ENCODE measurements at regions of chr11 and their contacts with region 1.

Region 1: DNA sequence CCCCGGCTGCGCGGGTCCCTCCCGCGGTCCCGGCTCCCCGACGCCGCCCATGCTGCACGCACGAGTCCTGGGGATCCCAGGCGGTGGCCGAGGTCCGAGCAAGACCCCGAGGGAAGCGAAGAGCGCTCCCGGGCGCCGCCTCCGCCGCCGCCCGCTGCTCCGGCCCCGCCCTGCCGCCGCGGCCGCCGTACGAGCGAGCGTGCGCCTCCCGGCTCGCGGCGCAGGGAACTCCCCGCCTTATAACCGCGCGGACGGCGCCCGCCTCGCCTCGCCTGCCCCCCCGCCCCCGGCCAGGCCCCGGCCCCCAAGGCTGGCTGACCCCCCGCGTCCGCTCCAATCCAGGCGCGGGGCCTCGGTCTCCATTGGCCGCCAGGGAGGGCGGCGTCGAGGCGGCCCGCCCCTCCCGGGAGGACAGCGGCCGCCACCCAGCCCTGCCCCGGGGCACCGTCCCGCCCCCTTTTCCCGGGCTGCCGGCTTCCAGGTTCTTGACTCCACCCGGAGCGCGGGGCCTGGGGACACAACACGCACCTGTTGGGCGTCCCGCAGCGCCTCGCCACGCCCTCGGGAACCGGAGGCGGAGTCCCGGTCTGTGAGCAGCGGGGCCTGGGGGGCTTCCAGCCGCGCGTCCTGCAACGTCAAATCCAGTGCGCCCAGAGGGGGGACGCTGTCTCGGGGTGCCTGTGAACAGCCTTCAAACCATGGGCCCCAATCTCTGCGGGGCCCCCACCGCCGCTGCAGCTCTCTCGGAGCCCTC is at the start of gene FADS3:
- DNase-seq: no peak
- H3K4me3 ChIP-seq: peak within 1 kb of the TSS; percentile 70 to 78
- H3K27ac ChIP-seq: peak within 1 kb of the TSS; percentile 89
- H3K4me1 ChIP-seq: peaks cover 25% of the 10 kb centered on the region
- H3K27me3 ChIP-seq: no peaks in the 10 kb centered on the region
- CTCF ChIP-seq: no peak
- POLR2A ChIP-seq: peak in 1 of 2 donors; percentile 36
- total RNA-seq, gene FADS3: 41.5 TPM

Region 2: GRCh38 chr11:61805146-61805545 is 86.4 kb before region 1 on chr11:
- intact Hi-C with region 1: no loop called
- DNase-seq: no peak
- H3K4me3 ChIP-seq: no peak overlapping the region
- H3K27ac ChIP-seq: no peak overlapping the region
- H3K4me1 ChIP-seq: no peaks in the 10 kb centered on the region
- H3K27me3 ChIP-seq: no peaks in the 10 kb centered on the region
- CTCF ChIP-seq: no peak
- POLR2A ChIP-seq: no peak

Region 3: DNA sequence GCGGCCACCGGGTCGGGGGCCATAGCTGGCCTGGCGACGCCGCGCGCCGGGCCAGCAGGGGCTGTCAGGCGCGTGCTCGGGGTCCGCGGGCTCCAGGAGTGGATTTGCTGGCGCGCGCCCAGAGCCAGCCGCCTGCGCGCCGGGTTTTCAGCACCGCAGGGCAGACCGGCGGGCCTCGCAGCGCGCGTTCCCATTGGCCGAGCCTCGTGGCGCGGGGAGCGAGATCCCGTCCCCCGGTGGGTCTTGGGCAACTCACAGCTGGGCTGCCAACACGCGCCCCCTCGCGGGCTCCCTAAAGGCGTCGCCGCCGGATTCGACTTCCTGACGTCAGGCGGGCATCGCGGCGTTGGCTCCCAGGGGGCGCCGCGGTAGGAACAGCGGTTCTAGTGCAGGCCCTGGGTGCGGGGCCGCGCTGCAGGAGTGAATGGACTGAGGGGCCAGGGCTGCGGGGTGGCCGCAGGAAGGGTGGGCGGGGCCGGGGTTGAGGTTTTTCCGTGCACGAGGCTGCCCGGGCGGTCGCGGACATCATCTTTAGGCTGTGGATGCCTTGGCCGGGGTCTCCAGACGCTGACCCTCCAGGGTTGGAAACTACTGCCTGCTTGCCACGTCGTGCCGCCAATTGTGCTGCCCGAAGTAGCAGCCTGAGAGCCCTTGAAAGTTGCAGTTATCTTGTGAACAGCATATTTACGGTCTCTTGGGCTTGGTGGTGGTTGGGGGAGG is 74.6 kb before region 1 on chr11 and contains the start of gene FADS1:
- intact Hi-C with region 1: loop called (anchors 5 kb)
- DNase-seq: no peak
- H3K4me3 ChIP-seq: peak within 1 kb of the TSS; percentile 51 to 83
- H3K27ac ChIP-seq: peak within 1 kb of the TSS; percentile 99
- H3K4me1 ChIP-seq: peaks cover 21% of the 10 kb centered on the region
- H3K27me3 ChIP-seq: no peaks in the 10 kb centered on the region
- CTCF ChIP-seq: peak in 1 of 3 experiments; percentile 25
- POLR2A ChIP-seq: peak in 1 of 2 donors; percentile 39
- total RNA-seq, gene FADS1: 9.8 TPM

Region 4: DNA sequence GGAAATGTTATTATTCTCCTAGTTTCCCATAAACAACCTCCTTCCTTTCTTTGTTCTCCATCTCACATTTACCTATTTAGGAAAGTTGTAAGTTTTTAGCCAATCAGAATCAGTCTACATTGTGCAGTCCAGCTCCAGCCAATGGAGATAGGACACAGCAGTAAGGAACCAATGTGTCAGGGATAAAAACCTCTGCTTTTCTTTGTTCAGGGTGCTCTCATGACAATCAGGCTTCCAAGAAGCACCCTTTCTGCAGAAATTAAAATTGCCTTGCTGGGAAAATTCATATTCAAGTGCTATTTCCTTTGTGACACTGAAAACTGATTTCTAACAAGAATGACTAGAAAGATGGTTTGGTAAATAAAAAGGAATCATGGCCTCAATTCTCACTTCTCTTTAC is 331.6 kb after region 1 on chr11:
- intact Hi-C with region 1: no loop called
- DNase-seq: no peak
- H3K4me3 ChIP-seq: no peak overlapping the region
- H3K27ac ChIP-seq: no peak overlapping the region
- H3K4me1 ChIP-seq: no peaks in the 10 kb centered on the region
- H3K27me3 ChIP-seq: no peaks in the 10 kb centered on the region
- CTCF ChIP-seq: no peak
- POLR2A ChIP-seq: no peak

Region 5: GRCh38 chr11:62337303-62338181 is 446.0 kb after region 1 on chr11 and contains the start of gene ASRGL1:
- intact Hi-C with region 1: no loop called
- DNase-seq: no peak
- H3K4me3 ChIP-seq: peak within 1 kb of the TSS; percentile 57 to 78
- H3K27ac ChIP-seq: peak within 1 kb of the TSS; percentile 15
- H3K4me1 ChIP-seq: peaks cover 9% of the 10 kb centered on the region
- H3K27me3 ChIP-seq: no peaks in the 10 kb centered on the region
- CTCF ChIP-seq: no peak
- POLR2A ChIP-seq: no peak
- total RNA-seq, gene ASRGL1: 5.6 TPM